GM10248 (cell line): ENCODE measurements at regions of chr10 and their contacts with region 1.

Region 1: GRCh38 chr10:122435212-122435827 is 19.1 kb upstream of the ARMS2 start:
- DNase-seq: no peak
- CTCF ChIP-seq: peak; percentile 36

Region 2: DNA sequence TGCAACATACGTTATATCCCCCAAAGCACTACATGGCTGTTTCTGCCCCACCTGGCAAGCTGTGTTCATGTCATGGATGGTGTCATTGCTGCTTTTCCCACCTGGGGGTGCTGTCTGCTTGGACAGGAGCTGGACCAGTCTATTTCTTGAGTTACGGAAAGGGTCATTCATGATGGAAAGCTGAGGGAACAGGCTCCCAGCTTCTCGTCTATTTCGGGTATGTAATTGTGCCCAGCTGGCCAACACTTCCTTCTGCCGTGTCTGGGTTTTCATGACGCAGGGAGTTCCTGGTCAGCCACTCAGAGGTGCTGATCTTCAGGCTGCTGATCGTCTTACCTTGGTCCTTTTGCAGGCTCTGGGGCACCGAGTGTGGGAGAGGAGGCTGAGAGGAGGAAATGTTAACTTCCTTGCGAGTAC is 155.6 kb before region 1 on chr10:
- CTCF ChIA-PET with region 1: interaction called, 74 read pairs
- POLR2A ChIA-PET with region 1: no interaction called
- DNase-seq: peak; percentile 37
- CTCF ChIP-seq: peak; percentile 67

Region 3: GRCh38 chr10:122298598-122299301 is 136.6 kb before region 1 on chr10:
- CTCF ChIA-PET with region 1: interaction called, 160 read pairs
- POLR2A ChIA-PET with region 1: no interaction called
- DNase-seq: peak; percentile 79
- CTCF ChIP-seq: peak; percentile 91

Region 4: GRCh38 chr10:122323941-122324675 is 111.2 kb before region 1 on chr10:
- CTCF ChIA-PET with region 1: interaction called, 13 read pairs
- POLR2A ChIA-PET with region 1: no interaction called
- DNase-seq: no peak
- CTCF ChIP-seq: no peak

Region 5: DNA sequence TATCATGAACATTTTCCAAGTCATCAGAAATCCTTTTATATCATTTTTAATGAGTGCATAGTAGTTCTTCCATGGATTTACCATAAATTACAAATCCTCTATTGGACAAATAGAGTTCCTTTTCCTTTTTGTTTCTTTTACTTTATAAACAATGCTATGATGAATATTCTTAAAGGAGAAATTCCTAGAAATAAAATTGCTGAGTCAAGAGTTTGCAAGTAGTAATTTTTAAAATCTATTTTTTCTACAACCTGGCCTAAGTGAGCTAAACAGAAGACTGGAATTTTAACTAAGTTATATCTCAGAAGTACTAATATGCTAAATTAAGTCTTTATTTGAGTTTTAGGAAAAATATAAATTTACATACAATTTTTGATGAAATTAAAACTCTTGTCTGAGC is 22.0 kb before region 1 on chr10:
- CTCF ChIA-PET with region 1: interaction called, 26 read pairs
- POLR2A ChIA-PET with region 1: no interaction called
- DNase-seq: no peak
- CTCF ChIP-seq: no peak